Endothelial cell of umbilical vein (primary cell): ENCODE measurements at regions of chr4 and their contacts with region 1.

Region 1: DNA sequence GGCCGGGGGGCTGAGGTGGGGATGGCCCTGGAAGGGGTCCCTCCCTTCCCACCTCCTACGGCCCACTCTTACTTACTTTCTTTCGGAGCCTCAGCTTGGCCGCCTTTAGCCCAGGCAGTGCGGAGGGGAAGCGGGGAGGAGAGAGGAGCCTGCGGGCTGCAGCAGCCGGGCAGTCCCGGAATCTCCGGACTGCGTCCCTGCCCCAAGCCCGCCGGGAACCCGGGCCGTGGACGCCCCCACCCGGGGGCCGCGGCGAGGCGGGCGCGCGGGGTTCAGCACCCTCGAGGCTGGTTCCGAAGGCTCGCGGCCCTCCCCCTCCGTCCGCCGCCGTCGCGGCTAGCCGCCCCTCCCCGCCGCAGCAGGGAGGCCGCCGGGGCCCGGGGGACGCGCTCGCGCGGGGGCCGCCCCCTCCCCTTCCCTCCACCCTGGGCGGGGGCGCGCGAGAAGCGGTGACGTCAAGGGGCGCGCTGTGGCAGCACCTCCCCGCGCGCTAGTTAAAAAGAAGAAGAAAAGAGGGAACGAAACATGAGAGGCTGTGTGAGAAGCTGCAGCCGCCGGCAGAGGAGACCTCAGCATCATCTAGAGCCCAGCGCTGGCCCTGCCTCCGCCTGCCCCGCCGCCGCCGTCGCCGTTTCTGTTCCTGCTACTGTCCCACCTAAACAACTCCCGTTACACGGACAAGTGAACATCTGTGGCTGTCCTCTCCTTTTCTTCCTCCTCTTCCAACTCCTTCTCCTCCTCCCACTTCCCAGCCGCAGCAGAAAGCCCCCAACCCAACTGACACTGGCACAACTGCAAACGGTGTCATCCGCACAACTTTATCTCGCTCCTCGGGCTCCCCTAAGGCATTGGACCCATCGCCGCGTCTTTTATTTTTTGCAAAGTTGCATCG is at the start of gene HHIP:
- DNase-seq: peak; percentile 88
- H3K4me3 ChIP-seq: peak within 1 kb of the TSS; percentile 62 to 100 (median 100)
- H3K27ac ChIP-seq: peak within 1 kb of the TSS; percentile 95
- H3K4me1 ChIP-seq: peaks cover 32% of the 10 kb centered on the region
- H3K27me3 ChIP-seq: no peaks in the 10 kb centered on the region
- CTCF ChIP-seq: no peak
- POLR2A ChIP-seq: peak; percentile 98
- total RNA-seq, gene HHIP: 971 and 1,052 TPM in 2 replicates

Region 2: DNA sequence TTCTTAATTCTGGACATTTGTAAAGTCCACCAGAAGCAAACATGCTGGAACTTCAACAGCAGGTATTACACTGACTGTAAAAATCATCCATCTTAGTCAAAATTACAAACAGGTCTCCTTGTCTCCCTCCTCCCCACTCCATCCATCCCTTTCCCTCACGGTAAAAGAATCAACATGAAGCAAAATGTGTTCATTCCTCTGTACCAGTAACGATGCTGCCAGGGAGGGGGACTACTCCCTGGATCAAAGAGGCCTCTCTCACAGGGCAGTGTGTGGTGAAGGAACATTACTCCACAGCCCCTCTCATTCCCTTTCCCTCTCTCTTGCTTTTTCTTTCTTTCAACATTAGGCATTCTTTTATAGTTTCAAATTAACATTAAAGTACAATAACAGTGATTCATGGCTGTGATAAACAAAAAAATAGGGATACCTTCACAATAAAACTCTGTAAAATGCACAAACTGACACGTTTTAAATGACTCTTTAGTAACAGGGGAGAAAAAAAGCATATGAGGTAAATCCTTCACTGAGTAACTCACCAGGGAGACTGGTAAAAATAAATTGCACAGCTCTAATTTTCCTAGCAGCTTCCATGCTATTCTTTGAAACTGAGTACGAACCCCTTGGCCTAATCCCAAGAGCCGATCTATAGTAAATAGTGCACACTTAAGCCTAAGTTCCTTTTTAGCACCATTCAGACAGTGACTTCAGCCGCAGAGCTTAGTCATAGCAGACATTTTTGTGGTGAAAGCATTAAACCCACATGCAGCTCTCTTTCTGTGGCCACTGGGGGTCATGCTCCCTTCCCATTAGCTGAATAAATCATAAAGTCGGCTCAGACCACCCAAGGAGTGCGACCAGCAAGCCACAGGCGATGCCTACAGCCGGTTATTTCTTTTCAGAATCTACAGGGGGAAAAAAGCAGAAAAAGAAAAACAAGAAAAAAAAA is 289.8 kb before region 1 on chr4:
- CTCF ChIA-PET with region 1: interaction called, 11 read pairs
- POLR2A ChIA-PET with region 1: no interaction called
- dilution Hi-C with region 1: no loop called
- intact Hi-C with region 1: loop called (anchors 1 kb)
- DNase-seq: peak; percentile 88
- H3K4me3 ChIP-seq: no peak overlapping the region
- H3K27ac ChIP-seq: peak overlapping the region; percentile 15
- H3K4me1 ChIP-seq: peaks cover 16% of the 10 kb centered on the region
- H3K27me3 ChIP-seq: no peaks in the 10 kb centered on the region
- CTCF ChIP-seq: peak in 1 of 2 donors; percentile 28
- POLR2A ChIP-seq: no peak

Region 3: GRCh38 chr4:144583658-144584057 is 62.2 kb before region 1 on chr4:
- CTCF ChIA-PET with region 1: interaction called, 18 read pairs
- POLR2A ChIA-PET with region 1: interaction called, 18 read pairs
- dilution Hi-C with region 1: no loop called
- intact Hi-C with region 1: loop called (anchors 1 kb)
- DNase-seq: peak; percentile 56
- H3K4me3 ChIP-seq: no peak overlapping the region
- H3K27ac ChIP-seq: peak overlapping the region; percentile 96
- H3K4me1 ChIP-seq: peaks cover 64% of the 10 kb centered on the region
- H3K27me3 ChIP-seq: no peaks in the 10 kb centered on the region
- CTCF ChIP-seq: no peak
- POLR2A ChIP-seq: no peak

Region 4: GRCh38 chr4:144611846-144612245 is 34.0 kb before region 1 on chr4:
- CTCF ChIA-PET with region 1: interaction called, 7 read pairs
- POLR2A ChIA-PET with region 1: no interaction called
- dilution Hi-C with region 1: no loop called
- intact Hi-C with region 1: loop called (anchors 1 kb)
- DNase-seq: peak; percentile 36
- H3K4me3 ChIP-seq: no peak overlapping the region
- H3K27ac ChIP-seq: no peak overlapping the region
- H3K4me1 ChIP-seq: peaks cover 9% of the 10 kb centered on the region
- H3K27me3 ChIP-seq: no peaks in the 10 kb centered on the region
- CTCF ChIP-seq: peak; percentile 48 to 66
- POLR2A ChIP-seq: no peak

Region 5: DNA sequence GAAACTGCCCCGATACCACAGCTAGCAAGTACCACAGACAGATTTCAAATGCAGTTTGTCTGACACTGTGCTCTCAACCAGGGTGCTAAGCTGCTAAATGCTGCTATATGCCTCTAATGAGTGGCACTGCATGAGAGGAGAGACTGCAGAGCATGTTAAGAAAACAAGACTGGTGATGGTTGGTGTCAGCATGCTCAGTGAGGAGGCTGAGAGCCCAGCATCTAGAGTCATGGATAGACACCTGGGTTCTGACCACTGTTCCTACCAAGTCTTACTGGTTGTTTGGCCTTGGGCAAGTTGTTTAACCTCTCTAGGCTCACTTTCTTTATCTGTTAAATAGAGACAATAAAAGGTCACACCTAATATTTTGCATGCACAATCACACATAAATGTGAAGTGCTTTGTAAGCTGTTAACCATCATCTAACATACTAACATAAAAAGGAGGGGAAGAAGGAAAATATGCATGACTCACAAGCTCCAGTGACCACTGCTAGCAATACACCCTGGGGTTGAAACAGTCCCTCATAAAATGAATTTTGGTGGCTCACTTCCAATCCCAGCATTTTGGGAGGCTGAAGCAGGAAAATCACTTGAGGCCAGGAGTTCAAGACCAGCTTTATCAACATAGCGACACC is 20.8 kb after region 1 on chr4:
- CTCF ChIA-PET with region 1: interaction called, 11 read pairs
- POLR2A ChIA-PET with region 1: interaction called, 3 read pairs
- dilution Hi-C with region 1: no loop called
- intact Hi-C with region 1: no loop called
- DNase-seq: peak; percentile 66
- H3K4me3 ChIP-seq: no peak overlapping the region
- H3K27ac ChIP-seq: no peak overlapping the region
- H3K4me1 ChIP-seq: peaks cover 19% of the 10 kb centered on the region
- H3K27me3 ChIP-seq: no peaks in the 10 kb centered on the region
- CTCF ChIP-seq: no peak
- POLR2A ChIP-seq: no peak

Region 6: DNA sequence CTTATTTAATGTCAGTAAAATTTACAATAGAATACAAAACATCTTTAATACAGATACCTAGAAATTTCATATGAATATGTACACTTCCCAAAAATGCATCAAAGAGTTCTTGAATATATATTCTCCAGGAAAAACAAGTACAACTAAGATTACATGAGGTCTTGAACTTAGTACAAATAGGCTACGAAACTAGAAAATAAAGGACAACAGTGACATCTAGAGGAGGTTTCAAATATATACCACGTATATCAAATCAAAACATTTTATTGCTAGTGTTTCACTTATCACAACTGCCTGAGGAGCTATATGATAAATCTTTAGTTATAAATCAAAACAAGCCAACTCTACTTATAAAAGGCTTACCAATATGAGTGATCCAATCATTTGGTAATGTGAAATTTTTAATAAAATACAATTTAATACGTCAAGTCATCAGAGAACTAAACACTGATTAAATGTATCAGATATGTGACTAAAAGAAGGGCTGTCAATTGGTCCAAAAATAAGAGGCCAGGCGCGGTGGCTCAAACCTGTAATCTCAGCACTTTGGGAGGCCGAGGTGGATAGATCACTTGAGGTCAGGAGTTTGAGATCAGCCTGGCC is 415.5 kb after region 1 on chr4:
- CTCF ChIA-PET with region 1: interaction called, 3 read pairs
- POLR2A ChIA-PET with region 1: no interaction called
- dilution Hi-C with region 1: no loop called
- intact Hi-C with region 1: loop called (anchors 10 kb)
- DNase-seq: peak; percentile 73
- H3K4me3 ChIP-seq: no peak overlapping the region
- H3K27ac ChIP-seq: no peak overlapping the region
- H3K4me1 ChIP-seq: peaks cover 6% of the 10 kb centered on the region
- H3K27me3 ChIP-seq: no peaks in the 10 kb centered on the region
- CTCF ChIP-seq: peak in 1 of 2 donors; percentile 13
- POLR2A ChIP-seq: no peak